A673 (cell line): ENCODE measurements at regions of chrX and their contacts with region 1.

Region 1: GRCh38 chrX:24395775-24396174 is 35.3 kb downstream of the SUPT20HL1 start:
- DNase-seq: peak; percentile 76
- H3K4me3 ChIP-seq: no peak overlapping the region
- H3K27ac ChIP-seq: no peak overlapping the region
- H3K4me1 ChIP-seq: no peaks in the 10 kb centered on the region
- H3K27me3 ChIP-seq: peaks cover 41% of the 10 kb centered on the region
- CTCF ChIP-seq: peak; percentile 75

Region 2: GRCh38 chrX:24498975-24499374 is 103.2 kb after region 1 on chrX:
- CTCF ChIA-PET with region 1: interaction called, 4 read pairs
- POLR2A ChIA-PET with region 1: no interaction called
- intact Hi-C with region 1: loop called (anchors 2 kb)
- DNase-seq: no peak
- H3K4me3 ChIP-seq: no peak overlapping the region
- H3K27ac ChIP-seq: no peak overlapping the region
- H3K4me1 ChIP-seq: peaks cover 7% of the 10 kb centered on the region
- H3K27me3 ChIP-seq: peaks cover 10% of the 10 kb centered on the region
- CTCF ChIP-seq: peak; percentile 64

Region 3: GRCh38 chrX:24561121-24561520 is 165.3 kb after region 1 on chrX:
- CTCF ChIA-PET with region 1: no interaction called
- POLR2A ChIA-PET with region 1: no interaction called
- intact Hi-C with region 1: loop called (anchors 5 kb)
- DNase-seq: peak; percentile 44
- H3K4me3 ChIP-seq: no peak overlapping the region
- H3K27ac ChIP-seq: no peak overlapping the region
- H3K4me1 ChIP-seq: no peaks in the 10 kb centered on the region
- H3K27me3 ChIP-seq: no peaks in the 10 kb centered on the region
- CTCF ChIP-seq: peak; percentile 49

Region 4: GRCh38 chrX:24728530-24728929 is 332.8 kb after region 1 on chrX:
- CTCF ChIA-PET with region 1: no interaction called
- POLR2A ChIA-PET with region 1: no interaction called
- intact Hi-C with region 1: loop called (anchors 10 kb)
- DNase-seq: peak; percentile 25
- H3K4me3 ChIP-seq: no peak overlapping the region
- H3K27ac ChIP-seq: peak overlapping the region; percentile 15
- H3K4me1 ChIP-seq: peaks cover 12% of the 10 kb centered on the region
- H3K27me3 ChIP-seq: peaks cover 3% of the 10 kb centered on the region
- CTCF ChIP-seq: no peak

Region 5: GRCh38 chrX:25275159-25275558 is 879.4 kb after region 1 on chrX:
- CTCF ChIA-PET with region 1: no interaction called
- POLR2A ChIA-PET with region 1: no interaction called
- intact Hi-C with region 1: loop called (anchors 10 kb)
- DNase-seq: peak; percentile 43
- H3K4me3 ChIP-seq: no peak overlapping the region
- H3K27ac ChIP-seq: no peak overlapping the region
- H3K4me1 ChIP-seq: no peaks in the 10 kb centered on the region
- H3K27me3 ChIP-seq: no peaks in the 10 kb centered on the region
- CTCF ChIP-seq: peak; percentile 55